Activated T-helper 2 cell treated with anti-CD3 and anti-CD28 coated beads, Interferon-gamma antibody, Interleukin-2, Interleukin-4, amounts not matched to agents 10 μg/mL and 5 μg/mL and 100 μg/mL, durations not matched to agents 14 hours and 24 hours and 36 hours (primary cell): ENCODE measurements at regions of chr17 and their contacts with region 1.

Region 1: DNA sequence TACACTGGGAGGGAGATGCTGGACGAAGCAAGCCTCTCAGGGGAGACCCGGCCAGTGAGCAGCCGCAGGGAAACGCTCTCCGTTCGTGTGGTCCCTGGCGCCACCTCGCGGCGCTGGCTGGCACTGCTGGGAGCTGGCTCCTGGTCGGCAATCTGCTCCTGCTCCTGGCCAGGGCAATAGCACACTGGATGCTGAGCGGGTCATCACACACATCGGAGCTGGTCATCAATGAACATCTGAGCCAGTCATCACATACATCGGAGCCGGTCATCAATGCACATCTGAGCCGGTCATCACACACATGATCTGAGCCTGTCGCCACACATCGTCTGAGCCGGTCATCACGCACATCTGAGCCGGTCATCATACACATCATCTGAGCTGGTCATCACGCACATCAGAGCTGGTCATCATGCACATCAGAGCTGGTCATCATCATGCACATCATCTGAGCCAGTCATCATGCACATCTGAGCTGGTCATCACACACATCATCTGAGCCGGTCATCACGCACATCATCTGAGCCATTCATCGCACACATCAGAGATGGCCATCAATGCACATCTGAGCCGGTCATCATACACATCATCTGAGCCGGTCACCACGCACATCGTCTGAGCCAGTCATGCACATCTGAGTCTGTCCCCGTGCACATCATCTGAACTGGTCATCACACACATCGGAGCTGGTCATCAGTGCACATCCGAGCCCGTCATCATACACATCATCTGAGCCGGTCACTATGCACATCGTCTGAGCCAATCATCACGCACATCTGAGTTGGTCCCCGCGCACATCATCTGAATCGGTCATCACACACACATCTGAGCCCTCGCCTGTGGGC is 217.3 kb downstream of the RBFOX3 start:
- DNase-seq: peak; percentile 52
- H3K4me3 Mint-ChIP-seq: no peak overlapping the region
- H3K27ac Mint-ChIP-seq: no peak overlapping the region
- H3K4me1 Mint-ChIP-seq: no peaks in the 10 kb centered on the region
- H3K27me3 Mint-ChIP-seq: peaks cover 17% of the 10 kb centered on the region

Region 2: GRCh38 chr17:79074650-79075445 is 318.7 kb before region 1 on chr17 and contains the start of gene ENGASE:
- intact Hi-C with region 1: loop called (anchors 5 kb)
- DNase-seq: peak; percentile 93
- H3K4me3 Mint-ChIP-seq: peak within 1 kb of the TSS; percentile 82
- H3K27ac Mint-ChIP-seq: peak within 1 kb of the TSS; percentile 60
- H3K4me1 Mint-ChIP-seq: peaks cover 7% of the 10 kb centered on the region
- H3K27me3 Mint-ChIP-seq: peaks cover 3% of the 10 kb centered on the region
- total RNA-seq, gene ENGASE: 51.0 and 51.4 TPM in 2 replicates

Region 3: DNA sequence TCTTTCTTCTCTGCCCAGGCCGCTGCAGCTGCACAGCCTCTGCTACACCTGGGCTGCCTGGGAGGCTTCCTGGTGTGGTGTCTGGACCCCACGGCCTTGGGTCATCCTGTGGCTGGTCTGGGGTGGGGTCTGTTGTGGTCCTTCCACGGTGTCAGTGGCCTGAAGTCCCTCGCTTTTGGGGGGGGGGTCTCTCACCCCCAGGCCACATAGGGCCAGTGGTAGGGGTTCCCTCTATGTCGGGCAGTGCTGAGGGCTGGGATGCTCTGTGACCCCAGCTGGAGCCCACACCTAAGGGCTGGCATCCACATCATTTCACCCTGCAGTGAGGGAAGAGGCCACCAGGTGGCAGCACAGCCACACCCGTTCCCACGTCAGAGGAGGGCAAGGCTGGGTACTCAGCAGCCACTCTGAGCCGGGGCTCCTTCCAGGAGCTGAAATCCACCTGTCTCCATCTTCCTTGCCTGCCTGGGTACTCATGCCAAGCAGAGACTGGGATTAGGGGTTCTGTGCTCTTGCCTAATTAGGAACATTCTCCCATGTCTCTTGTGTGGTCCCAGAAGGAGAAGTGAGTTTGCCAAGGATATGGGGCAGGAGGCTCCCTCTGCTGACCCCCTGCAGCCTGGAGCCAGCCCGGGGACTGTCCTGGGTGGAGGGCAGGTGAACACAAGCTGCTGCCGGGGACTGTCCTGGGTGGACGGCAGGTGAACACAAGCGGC is 306.0 kb before region 1 on chr17:
- intact Hi-C with region 1: loop called (anchors 2 kb)
- DNase-seq: peak; percentile 55
- H3K4me3 Mint-ChIP-seq: no peak overlapping the region
- H3K27ac Mint-ChIP-seq: no peak overlapping the region
- H3K4me1 Mint-ChIP-seq: no peaks in the 10 kb centered on the region
- H3K27me3 Mint-ChIP-seq: peaks cover 5% of the 10 kb centered on the region

Region 4: DNA sequence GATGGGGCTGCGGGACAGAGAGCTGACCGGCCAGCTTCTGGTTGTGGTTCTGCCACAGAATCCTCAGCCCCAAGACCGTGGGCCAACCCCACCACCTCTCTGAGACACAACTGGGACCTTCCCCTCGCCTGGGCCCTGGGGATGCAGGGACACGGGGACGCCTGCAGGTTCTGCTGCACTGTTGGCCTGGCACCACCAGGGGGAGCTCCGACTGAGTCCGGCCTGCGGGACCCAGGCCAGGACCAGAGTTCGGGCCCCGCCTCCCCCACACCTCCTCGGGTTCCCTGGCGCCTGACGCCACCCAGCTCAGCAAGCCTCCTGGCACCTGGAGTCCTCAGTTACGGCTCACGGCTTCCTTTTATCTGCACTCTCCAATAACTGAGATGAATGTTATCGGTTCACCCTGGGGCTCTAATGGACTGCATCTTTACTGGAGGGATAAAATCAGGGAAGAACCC is 614.8 kb after region 1 on chr17:
- intact Hi-C with region 1: no loop called
- DNase-seq: peak; percentile 71
- H3K4me3 Mint-ChIP-seq: no peak overlapping the region
- H3K27ac Mint-ChIP-seq: no peak overlapping the region
- H3K4me1 Mint-ChIP-seq: no peaks in the 10 kb centered on the region
- H3K27me3 Mint-ChIP-seq: no peaks in the 10 kb centered on the region